GM10248 (cell line): ENCODE measurements at regions of chr15 and their contacts with region 1.

Region 1: GRCh38 chr15:72155635-72156616 is 37.7 kb downstream of the SENP8 start:
- DNase-seq: peak; percentile 79
- CTCF ChIP-seq: peak; percentile 93

Region 2: GRCh38 chr15:71752604-71753289 is 403.2 kb before region 1 on chr15:
- CTCF ChIA-PET with region 1: interaction called, 32 read pairs
- POLR2A ChIA-PET with region 1: no interaction called
- DNase-seq: peak; percentile 44
- CTCF ChIP-seq: peak; percentile 44

Region 3: GRCh38 chr15:71800835-71801745 is 354.8 kb before region 1 on chr15:
- CTCF ChIA-PET with region 1: interaction called, 43 read pairs
- POLR2A ChIA-PET with region 1: no interaction called
- DNase-seq: peak; percentile 65
- CTCF ChIP-seq: peak; percentile 70

Region 4: DNA sequence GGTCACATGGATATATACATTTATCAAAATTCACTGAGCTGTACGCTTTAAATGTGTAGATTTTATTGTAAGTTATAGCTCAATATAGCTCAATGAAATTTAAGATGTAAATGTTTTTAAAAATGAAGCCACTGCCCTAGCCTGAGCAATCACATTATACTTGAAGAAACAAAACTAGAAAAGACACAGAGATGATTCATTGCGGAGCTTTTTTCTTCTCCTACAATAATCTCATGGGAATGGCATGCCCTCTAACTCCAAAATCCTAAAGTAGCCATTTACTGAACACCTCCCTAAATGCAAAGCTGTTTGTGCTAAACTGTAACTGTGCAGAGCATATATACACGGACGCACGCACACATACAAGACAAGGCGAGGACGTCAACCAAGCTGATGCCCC is 122.2 kb before region 1 on chr15:
- CTCF ChIA-PET with region 1: no interaction called
- POLR2A ChIA-PET with region 1: no interaction called
- DNase-seq: no peak
- CTCF ChIP-seq: no peak

Region 5: GRCh38 chr15:72179959-72180823 is 24.3 kb after region 1 on chr15:
- CTCF ChIA-PET with region 1: interaction called, 14 read pairs
- POLR2A ChIA-PET with region 1: no interaction called
- DNase-seq: no peak
- CTCF ChIP-seq: no peak

Region 6: GRCh38 chr15:72289545-72290325 is 133.8 kb after region 1 on chr15:
- CTCF ChIA-PET with region 1: no interaction called
- POLR2A ChIA-PET with region 1: no interaction called
- DNase-seq: no peak
- CTCF ChIP-seq: no peak